ENCODE measurements at regions of chr13 and their contacts with region 1.

Region 1: DNA sequence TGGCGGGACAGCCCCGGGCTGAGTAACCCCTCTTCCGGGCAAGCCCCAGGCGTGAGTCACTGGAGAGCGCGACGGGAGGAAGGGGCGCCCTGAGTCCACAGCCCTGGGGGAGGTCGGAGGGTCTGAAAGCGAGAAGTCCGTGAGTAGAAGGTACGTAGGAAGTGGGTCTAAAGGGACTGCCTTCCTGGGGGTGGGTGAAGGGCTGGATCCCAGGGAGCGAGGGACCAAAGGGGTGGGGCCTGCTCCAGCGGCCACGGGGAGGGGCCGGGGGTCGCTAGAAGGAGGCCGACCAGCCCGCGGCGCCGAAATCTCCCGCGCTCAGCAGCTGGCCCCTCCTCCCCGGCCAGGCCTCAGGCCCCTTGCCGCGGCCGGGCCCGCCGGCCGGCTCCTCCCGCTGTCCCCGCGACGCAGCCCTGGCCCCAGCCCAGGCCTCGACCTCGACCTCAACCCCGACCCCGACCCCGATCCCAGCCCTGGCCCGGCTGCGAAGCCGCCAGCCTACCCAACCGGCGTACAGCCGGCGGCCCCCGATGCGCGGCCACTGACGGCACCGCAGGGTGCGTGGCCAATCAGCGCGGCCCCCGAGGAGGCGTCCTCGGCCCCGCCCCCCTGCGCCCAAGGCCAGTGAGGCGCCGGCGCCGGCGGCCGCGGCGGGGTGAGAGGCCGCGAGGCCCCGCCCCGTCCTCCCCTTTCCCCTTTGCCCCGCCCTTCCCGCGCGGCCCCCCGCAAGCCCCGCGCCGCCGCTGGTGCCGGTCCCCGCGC is 22.6 kb downstream of the IPO5 start:
- DNase-seq: peak; percentile 93 to 94
- ATAC-seq: peak; percentile 97 to 99 (median 99)
- H3K4me3 ChIP-seq: peak overlapping the region; percentile 90
- H3K27ac ChIP-seq: peak overlapping the region; percentile 91
- H3K4me1 ChIP-seq: peaks cover 35% of the 10 kb centered on the region
- H3K27me3 ChIP-seq: no peaks in the 10 kb centered on the region
- CTCF ChIP-seq: no peak

Region 2: GRCh38 chr13:98155475-98156109 is 179.6 kb after region 1 on chr13:
- intact Hi-C with region 1: no loop called
- DNase-seq: no peak
- ATAC-seq: no peak
- H3K4me3 ChIP-seq: no peak overlapping the region
- H3K27ac ChIP-seq: no peak overlapping the region
- H3K4me1 ChIP-seq: no peaks in the 10 kb centered on the region
- H3K27me3 ChIP-seq: no peaks in the 10 kb centered on the region
- CTCF ChIP-seq: no peak

Region 3: DNA sequence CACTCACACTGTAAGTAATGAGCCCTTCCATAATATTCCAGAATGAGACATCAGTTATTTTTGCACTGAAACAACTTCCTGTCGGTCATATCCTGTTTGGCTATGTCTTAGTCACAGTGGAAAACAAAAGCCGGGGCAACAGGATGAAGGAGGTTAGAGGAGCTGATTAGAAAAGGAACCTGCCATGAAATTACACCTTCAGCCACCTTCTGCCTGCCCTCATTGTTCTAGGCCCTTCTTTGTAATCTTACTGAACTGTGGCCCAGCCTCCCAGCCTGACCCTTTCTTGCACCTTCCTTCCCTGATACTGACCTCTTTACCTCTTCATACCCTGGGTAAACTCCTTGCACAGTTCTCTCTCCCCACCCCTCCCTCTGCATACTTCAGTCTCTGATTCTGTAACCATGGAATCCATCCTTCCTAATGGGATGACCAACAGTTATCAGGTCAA is 934.5 kb after region 1 on chr13:
- intact Hi-C with region 1: loop called in 1 of 2 experiments (anchors 5 kb)
- DNase-seq: no peak
- ATAC-seq: peak; percentile 53 to 78 (median 65)
- H3K4me3 ChIP-seq: no peak overlapping the region
- H3K27ac ChIP-seq: peak overlapping the region; percentile 66
- H3K4me1 ChIP-seq: no peaks in the 10 kb centered on the region
- H3K27me3 ChIP-seq: no peaks in the 10 kb centered on the region
- CTCF ChIP-seq: no peak

Measured in psoas muscle (tissue), 8 donors.